CD4-positive, alpha-beta memory T cell (primary cell): ENCODE measurements at regions of chr10 and their contacts with region 1.

Region 1: DNA sequence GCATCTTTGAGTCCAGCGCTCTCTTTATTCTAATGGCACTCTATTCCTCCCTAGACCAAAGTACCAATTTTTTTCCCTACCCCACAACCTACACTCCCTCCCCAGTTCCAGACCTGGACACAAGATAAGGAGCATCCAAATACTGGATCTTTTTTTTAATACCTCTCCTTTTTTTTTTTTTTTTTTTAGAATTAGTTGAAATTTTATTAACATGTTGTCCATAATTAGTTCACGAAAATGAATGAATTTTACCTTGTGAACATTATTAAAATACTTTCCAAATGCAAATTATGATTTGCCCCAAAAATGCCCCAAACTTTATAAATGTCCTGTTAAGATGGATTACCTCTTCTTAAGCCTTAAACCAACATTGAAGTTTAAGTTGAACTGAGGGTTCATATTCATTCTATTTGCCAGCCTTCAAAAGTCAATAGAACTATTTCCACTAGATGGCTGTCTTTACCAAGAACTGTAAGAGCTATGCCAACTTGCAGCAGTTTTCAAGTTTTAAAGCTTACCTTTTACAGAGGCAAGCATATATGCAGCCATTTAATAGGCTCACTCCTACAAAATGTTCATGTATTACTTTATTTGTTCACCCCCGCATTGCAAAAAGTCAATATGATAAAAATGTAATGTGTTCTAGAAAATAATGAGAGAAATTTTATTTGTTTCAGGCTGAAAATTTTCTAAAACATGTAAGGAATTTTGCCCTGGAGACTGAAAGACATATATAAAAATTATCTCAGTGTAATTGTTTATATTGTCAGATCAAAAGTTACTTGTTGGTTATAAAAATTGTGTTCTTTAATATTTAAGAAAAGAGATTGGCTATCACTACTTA is 39.7 kb upstream of the TNKS2 start:
- DNase-seq: peak in 4 of 5 donors; percentile 49 to 62 (median 55)
- H3K4me3 ChIP-seq: no peak overlapping the region
- H3K4me3 Mint-ChIP-seq: no peak overlapping the region
- H3K27ac ChIP-seq: no peak overlapping the region
- H3K27ac Mint-ChIP-seq: no peak overlapping the region
- H3K4me1 ChIP-seq: no peaks in the 10 kb centered on the region
- H3K4me1 Mint-ChIP-seq: peaks cover 0 to 2% (median 0%) of the 10 kb centered on the region in 4 donors
- H3K27me3 ChIP-seq: no peaks in the 10 kb centered on the region
- H3K27me3 Mint-ChIP-seq: peaks cover 11% of the 10 kb centered on the region in 2 donors

Region 2: GRCh38 chr10:91816981-91817380 is 58.5 kb after region 1 on chr10:
- CTCF ChIA-PET with region 1: interaction called, 16 read pairs
- POLR2A ChIA-PET with region 1: no interaction called
- intact Hi-C with region 1: no loop called
- DNase-seq: no peak
- H3K4me3 ChIP-seq: no peak overlapping the region
- H3K4me3 Mint-ChIP-seq: no peak overlapping the region
- H3K27ac ChIP-seq: no peak overlapping the region
- H3K27ac Mint-ChIP-seq: peak overlapping the region in 1 of 7 donors; percentile 43
- H3K4me1 ChIP-seq: peaks cover 5% of the 10 kb centered on the region
- H3K4me1 Mint-ChIP-seq: peaks cover 13 to 27% (median 18%) of the 10 kb centered on the region in 4 donors
- H3K27me3 ChIP-seq: no peaks in the 10 kb centered on the region
- H3K27me3 Mint-ChIP-seq: no peaks in the 10 kb centered on the region

Region 3: GRCh38 chr10:91923371-91924211 is 165.1 kb after region 1 on chr10 and contains the start of gene BTAF1:
- CTCF ChIA-PET with region 1: interaction called, 16 read pairs
- POLR2A ChIA-PET with region 1: no interaction called
- intact Hi-C with region 1: no loop called
- DNase-seq: peak; percentile 89 to 93 (median 92)
- H3K4me3 ChIP-seq: peak within 1 kb of the TSS; percentile 79 to 87
- H3K4me3 Mint-ChIP-seq: peak within 1 kb of the TSS; percentile 90 to 99 (median 94)
- H3K27ac ChIP-seq: peak within 1 kb of the TSS; percentile 91
- H3K27ac Mint-ChIP-seq: peak within 1 kb of the TSS; percentile 96 to 100 (median 99)
- H3K4me1 ChIP-seq: peaks cover 50% of the 10 kb centered on the region
- H3K4me1 Mint-ChIP-seq: peaks cover 29 to 50% (median 38%) of the 10 kb centered on the region in 4 donors
- H3K27me3 ChIP-seq: no peaks in the 10 kb centered on the region
- H3K27me3 Mint-ChIP-seq: peaks cover 2% of the 10 kb centered on the region in 2 donors
- total RNA-seq, gene BTAF1: 69.1 to 76.9 TPM